ENCODE measurements at regions of chr3 and their contacts with region 1.

Region 1: DNA sequence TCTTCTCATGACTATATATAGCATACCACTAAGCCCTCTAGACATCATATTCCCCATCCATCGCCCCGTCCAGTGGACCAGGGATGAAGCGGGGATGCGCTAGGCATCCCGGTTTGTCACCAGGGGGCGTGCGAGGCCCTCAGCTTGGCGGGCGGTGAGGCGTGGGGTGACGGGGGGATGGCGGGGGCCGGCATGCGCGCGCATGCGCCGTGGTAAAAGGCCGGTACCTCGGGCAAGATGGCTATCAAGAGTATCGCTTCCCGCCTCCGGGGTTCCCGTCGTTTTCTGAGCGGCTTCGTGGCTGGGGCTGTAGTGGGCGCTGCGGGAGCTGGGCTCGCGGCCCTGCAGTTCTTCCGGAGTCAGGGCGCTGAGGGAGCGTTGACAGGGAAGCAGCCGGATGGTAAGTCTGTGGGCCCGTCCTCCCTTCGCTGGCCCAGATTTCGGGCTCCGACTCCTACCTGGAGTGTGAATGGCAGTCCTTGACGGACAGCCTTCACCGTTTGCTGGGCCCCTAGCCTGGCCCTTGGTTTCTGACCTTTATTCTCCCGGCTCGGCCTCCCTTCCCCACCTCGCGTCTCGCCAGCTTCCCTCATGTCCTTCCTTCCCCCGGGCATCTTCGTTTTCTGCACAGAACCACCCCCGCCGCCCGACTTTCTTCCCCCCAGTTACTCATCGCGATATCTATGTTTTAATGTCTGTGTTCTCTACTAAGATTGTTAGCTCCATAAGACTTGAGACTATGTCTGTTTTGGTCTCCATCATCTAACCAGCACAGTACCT is at the start of gene EXOG:
- DNase-seq: peak; percentile 82
- H3K4me3 ChIP-seq: peak within 1 kb of the TSS; percentile 89
- H3K27ac ChIP-seq: peak within 1 kb of the TSS; percentile 71
- H3K27me3 ChIP-seq: no peaks in the 10 kb centered on the region
- CTCF ChIP-seq: peak; percentile 88
- polyA plus RNA-seq, gene EXOG: 15.1 and 19.3 TPM in 2 replicates

Region 2: GRCh38 chr3:38327335-38328009 is 168.8 kb before region 1 on chr3:
- CTCF ChIA-PET with region 1: no interaction called
- POLR2A ChIA-PET with region 1: interaction called, 16 read pairs
- DNase-seq: no peak
- H3K4me3 ChIP-seq: no peak overlapping the region
- H3K27ac ChIP-seq: no peak overlapping the region
- H3K27me3 ChIP-seq: peaks cover 3% of the 10 kb centered on the region
- CTCF ChIP-seq: no peak

Region 3: GRCh38 chr3:38354588-38355330 is 141.6 kb before region 1 on chr3:
- CTCF ChIA-PET with region 1: interaction called, 10 read pairs
- POLR2A ChIA-PET with region 1: no interaction called
- DNase-seq: no peak
- H3K4me3 ChIP-seq: no peak overlapping the region
- H3K27ac ChIP-seq: no peak overlapping the region
- H3K27me3 ChIP-seq: no peaks in the 10 kb centered on the region
- CTCF ChIP-seq: no peak

Region 4: GRCh38 chr3:38479431-38480092 is 16.8 kb before region 1 on chr3:
- CTCF ChIA-PET with region 1: interaction called, 35 read pairs
- POLR2A ChIA-PET with region 1: no interaction called
- DNase-seq: peak; percentile 37
- H3K4me3 ChIP-seq: no peak overlapping the region
- H3K27ac ChIP-seq: no peak overlapping the region
- H3K27me3 ChIP-seq: no peaks in the 10 kb centered on the region
- CTCF ChIP-seq: peak; percentile 96

Region 5: DNA sequence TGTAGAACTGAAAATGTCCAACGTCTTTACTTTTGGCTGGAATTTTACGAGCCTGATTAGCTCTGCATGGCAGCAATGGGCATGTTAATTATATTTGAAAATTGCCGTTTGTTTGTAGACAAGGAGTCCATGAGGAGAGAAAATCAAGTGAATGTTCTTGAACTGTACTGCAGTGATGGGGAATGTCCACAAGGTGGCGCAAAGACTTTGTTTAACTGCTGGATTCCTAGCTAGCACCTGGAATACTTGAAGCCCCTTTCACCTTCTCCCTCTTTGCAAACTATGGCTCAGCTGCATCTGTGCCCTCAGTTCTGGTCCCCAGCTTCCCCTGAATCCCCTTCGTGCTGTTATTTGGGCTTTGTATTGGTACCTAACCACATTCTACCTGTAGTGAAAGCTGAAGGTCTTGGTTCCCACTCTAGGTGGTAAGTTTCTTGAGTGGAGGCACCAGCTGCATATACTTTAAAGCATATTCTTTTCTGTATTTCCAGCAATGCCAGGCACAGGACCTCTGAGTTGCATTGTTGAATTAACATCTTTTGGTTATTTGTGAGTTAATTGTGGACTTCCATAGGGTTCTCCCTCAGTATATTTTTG is 25.2 kb after region 1 on chr3:
- CTCF ChIA-PET with region 1: interaction called, 51 read pairs
- POLR2A ChIA-PET with region 1: interaction called, 4 read pairs
- DNase-seq: peak; percentile 49
- H3K4me3 ChIP-seq: no peak overlapping the region
- H3K27ac ChIP-seq: no peak overlapping the region
- H3K27me3 ChIP-seq: no peaks in the 10 kb centered on the region
- CTCF ChIP-seq: peak; percentile 88

Region 6: DNA sequence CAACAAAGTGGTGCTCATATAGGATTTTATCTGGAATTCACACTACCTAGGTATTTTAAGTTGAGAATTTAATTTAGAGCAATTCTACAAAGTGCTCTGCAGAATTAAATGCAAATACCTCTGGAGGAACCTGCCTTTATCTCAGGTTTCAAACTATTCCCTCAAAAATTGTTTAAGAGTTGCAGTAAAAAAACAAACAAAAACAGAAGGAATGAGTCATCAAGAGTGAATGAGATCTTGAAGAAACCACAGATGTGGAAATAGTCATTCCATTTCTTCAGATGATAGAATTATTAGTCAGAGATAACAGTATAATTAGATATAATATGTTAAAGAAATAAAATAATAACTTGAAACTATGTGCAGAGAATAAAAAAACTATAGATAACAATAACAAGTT is 234.0 kb after region 1 on chr3:
- CTCF ChIA-PET with region 1: interaction called, 10 read pairs
- POLR2A ChIA-PET with region 1: no interaction called
- DNase-seq: peak; percentile 48
- H3K4me3 ChIP-seq: no peak overlapping the region
- H3K27ac ChIP-seq: no peak overlapping the region
- H3K27me3 ChIP-seq: no peaks in the 10 kb centered on the region
- CTCF ChIP-seq: no peak

Region 7: DNA sequence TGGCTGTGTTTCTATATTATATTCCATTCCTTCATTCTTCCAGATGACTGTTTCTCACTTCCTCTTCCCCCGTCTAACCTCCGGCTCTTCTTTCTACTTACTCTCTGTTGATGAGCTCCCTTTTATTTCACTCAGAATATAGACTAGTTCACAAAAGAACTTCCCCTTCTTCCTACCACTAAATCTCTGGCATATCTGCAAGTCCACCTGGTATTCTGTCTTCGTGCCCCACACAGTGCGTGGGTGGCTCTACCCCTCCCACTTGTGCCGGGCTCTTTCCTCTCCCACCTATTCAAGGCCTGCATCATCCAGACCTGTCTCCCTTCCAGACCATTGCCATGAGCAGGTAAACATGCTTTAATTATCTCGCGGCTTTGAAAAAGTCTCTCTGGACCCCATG is 246.7 kb after region 1 on chr3:
- CTCF ChIA-PET with region 1: no interaction called
- POLR2A ChIA-PET with region 1: no interaction called
- DNase-seq: no peak
- H3K4me3 ChIP-seq: no peak overlapping the region
- H3K27ac ChIP-seq: no peak overlapping the region
- H3K27me3 ChIP-seq: peaks cover 6% of the 10 kb centered on the region
- CTCF ChIP-seq: no peak

Region 8: DNA sequence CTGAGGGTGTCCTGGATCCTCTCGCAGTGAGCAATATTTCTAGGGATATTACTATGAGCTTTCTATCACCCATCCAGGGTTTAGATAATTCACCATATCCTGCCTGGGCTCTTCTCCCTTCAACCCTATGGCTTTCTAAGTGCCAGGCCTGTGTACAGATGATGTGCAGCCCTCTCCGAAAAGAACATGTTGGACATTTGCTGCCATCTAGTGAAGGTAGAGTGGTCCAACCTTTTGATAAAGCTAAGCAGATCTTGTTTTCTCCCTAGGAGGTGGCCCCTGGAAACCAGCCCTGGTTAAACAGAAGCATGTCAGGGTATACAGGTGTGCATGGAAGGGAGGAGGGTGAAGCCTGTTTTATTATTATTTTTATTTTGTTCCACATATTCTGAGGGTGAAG is 347.6 kb after region 1 on chr3:
- CTCF ChIA-PET with region 1: interaction called, 31 read pairs
- POLR2A ChIA-PET with region 1: no interaction called
- DNase-seq: peak; percentile 29
- H3K4me3 ChIP-seq: no peak overlapping the region
- H3K27ac ChIP-seq: no peak overlapping the region
- H3K27me3 ChIP-seq: peaks cover 5% of the 10 kb centered on the region
- CTCF ChIP-seq: peak; percentile 70

Measured in AG04450 (cell line).